Ovary (tissue), 10 donors: ENCODE measurements at regions of chr18 and their contacts with region 1.

Region 1: GRCh38 chr18:36296650-36297416 is 680 bp upstream of the FHOD3 start:
- DNase-seq: peak; percentile 78 to 86 (median 84)
- H3K4me3 ChIP-seq: peak overlapping the region; percentile 47
- H3K27ac ChIP-seq: peak overlapping the region; percentile 51 to 71
- H3K4me1 ChIP-seq: no peaks in the 10 kb centered on the region
- H3K27me3 ChIP-seq: no peaks in the 10 kb centered on the region
- CTCF ChIP-seq: peak in 1 of 3 donors; percentile 41
- EP300 ChIP-seq: no peak
- POLR2A ChIP-seq: no peak

Region 2: DNA sequence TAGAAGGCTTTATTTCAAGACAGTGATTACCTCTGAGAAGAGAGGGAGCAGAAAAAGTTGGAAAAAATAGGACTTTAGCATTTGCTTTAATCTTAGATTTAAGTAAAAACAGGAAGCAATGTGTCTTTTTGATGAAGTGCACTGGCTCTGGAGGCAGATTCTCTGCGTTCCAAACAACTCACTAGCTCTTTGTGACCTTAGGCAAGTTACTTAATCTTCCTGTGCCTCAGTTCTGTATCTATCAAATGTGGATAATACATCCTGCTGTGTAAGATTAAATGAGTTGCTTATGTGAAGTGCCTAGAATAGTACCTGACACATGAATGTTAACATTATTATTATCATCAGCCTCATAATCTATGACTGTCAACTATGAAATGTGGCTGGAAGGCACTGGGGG is 271.8 kb before region 1 on chr18:
- intact Hi-C with region 1: loop called in 1 of 4 experiments (anchors 10 kb)
- DNase-seq: no peak
- H3K4me3 ChIP-seq: no peak overlapping the region
- H3K27ac ChIP-seq: no peak overlapping the region
- H3K4me1 ChIP-seq: no peaks in the 10 kb centered on the region
- H3K27me3 ChIP-seq: no peaks in the 10 kb centered on the region
- CTCF ChIP-seq: no peak
- EP300 ChIP-seq: no peak
- POLR2A ChIP-seq: no peak

Region 3: GRCh38 chr18:36441426-36442240 is 144.8 kb after region 1 on chr18:
- intact Hi-C with region 1: loop called in 1 of 4 experiments (anchors 10 kb)
- DNase-seq: peak in 1 of 5 donors; percentile 45
- H3K4me3 ChIP-seq: no peak overlapping the region
- H3K27ac ChIP-seq: peak overlapping the region in 1 of 2 donors; percentile 36
- H3K4me1 ChIP-seq: peaks cover 3% of the 10 kb centered on the region
- H3K27me3 ChIP-seq: no peaks in the 10 kb centered on the region
- CTCF ChIP-seq: no peak
- EP300 ChIP-seq: no peak
- POLR2A ChIP-seq: no peak

Region 4: DNA sequence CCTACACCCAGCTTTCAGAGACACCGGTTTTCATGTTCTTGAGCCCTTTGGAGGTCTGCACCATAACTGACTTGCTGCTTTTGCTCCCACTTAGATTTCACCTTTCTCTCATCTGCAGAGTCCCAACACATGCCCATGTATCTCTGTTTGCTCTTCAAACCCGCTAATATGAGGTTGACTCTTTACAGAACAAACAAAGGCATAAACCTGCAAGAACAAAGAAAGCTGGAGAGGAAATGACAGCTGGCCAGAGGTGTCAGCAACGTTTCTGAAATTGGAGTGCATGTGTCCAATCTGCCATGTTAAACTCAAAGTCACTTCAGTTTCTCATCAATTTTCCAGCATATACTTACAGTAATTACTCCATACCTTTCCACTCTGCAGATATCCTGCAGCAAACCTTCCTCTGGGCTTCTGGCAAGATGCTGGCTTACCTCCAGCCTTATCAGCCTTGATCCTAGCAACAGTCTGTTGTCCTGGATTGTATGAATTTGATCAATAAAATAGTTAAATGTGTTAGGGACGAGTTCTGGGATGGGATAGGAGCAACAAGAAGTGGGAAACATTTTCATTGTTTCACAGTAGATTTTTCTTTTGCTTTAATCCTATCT is 158.1 kb after region 1 on chr18:
- intact Hi-C with region 1: no loop called
- DNase-seq: no peak
- H3K4me3 ChIP-seq: no peak overlapping the region
- H3K27ac ChIP-seq: no peak overlapping the region
- H3K4me1 ChIP-seq: no peaks in the 10 kb centered on the region
- H3K27me3 ChIP-seq: no peaks in the 10 kb centered on the region
- CTCF ChIP-seq: no peak
- EP300 ChIP-seq: no peak
- POLR2A ChIP-seq: no peak

Region 5: GRCh38 chr18:36757081-36757480 is 460.2 kb after region 1 on chr18:
- intact Hi-C with region 1: loop called in 2 of 4 experiments (anchors 10 kb)
- DNase-seq: no peak
- H3K4me3 ChIP-seq: no peak overlapping the region
- H3K27ac ChIP-seq: no peak overlapping the region
- H3K4me1 ChIP-seq: peaks cover 3% of the 10 kb centered on the region
- H3K27me3 ChIP-seq: no peaks in the 10 kb centered on the region
- CTCF ChIP-seq: peak in 2 of 3 donors; percentile 69 to 72
- EP300 ChIP-seq: no peak
- POLR2A ChIP-seq: no peak

Region 6: DNA sequence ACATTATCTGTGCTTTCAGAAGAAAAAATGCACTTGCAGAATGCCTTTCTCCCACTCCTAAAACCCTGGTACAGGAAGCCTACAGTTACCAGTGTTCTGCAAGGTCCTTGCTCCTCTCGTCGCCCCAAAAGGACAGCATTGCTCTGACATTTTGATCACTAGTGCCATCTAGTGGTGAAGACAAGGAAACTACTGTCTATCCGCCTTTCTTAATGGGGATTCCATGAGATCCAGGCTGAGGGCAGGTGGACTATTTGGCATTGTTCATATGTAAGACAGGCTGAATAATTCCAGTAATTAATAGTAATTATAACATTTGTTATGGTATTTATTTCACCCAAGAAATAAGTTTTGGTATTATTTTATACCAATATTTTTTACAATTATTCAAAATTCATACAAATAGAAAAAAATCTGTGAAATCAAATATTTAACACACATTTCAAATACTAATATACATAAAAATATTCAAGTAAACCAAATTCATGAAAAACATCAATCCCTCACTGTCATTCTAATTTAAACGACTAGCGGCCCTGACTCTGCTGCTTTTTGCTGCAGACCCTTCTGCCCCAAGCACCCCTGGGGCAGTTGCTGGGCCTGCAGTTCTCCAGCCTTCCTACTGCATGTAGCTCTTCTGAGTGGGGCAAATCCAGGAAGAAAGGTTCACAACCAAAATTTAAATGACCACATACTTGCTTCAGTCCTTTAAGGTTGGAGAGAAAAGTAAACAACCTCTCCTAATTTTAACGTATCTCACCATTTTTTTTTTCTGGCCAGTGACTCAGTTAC is 513.0 kb after region 1 on chr18:
- intact Hi-C with region 1: loop called in 1 of 4 experiments (anchors 10 kb)
- DNase-seq: peak in 3 of 5 donors; percentile 11 to 30 (median 26)
- H3K4me3 ChIP-seq: no peak overlapping the region
- H3K27ac ChIP-seq: no peak overlapping the region
- H3K4me1 ChIP-seq: peaks cover 6% of the 10 kb centered on the region
- H3K27me3 ChIP-seq: no peaks in the 10 kb centered on the region
- CTCF ChIP-seq: peak; percentile 47 to 59 (median 54)
- EP300 ChIP-seq: no peak
- POLR2A ChIP-seq: no peak